CD4-positive, alpha-beta memory T cell (primary cell): ENCODE measurements at regions of chr3 and their contacts with region 1.

Region 1: GRCh38 chr3:99850608-99851007 is 32.9 kb downstream of the CMSS1 start:
- DNase-seq: no peak
- H3K4me3 ChIP-seq: no peak overlapping the region
- H3K4me3 Mint-ChIP-seq: no peak overlapping the region
- H3K27ac ChIP-seq: no peak overlapping the region
- H3K27ac Mint-ChIP-seq: no peak overlapping the region
- H3K4me1 ChIP-seq: no peaks in the 10 kb centered on the region
- H3K4me1 Mint-ChIP-seq: peaks cover 0 to 7% (median 3%) of the 10 kb centered on the region in 4 donors
- H3K27me3 ChIP-seq: no peaks in the 10 kb centered on the region
- H3K27me3 Mint-ChIP-seq: no peaks in the 10 kb centered on the region

Region 2: GRCh38 chr3:99794485-99794884 is 56.1 kb before region 1 on chr3:
- CTCF ChIA-PET with region 1: no interaction called
- POLR2A ChIA-PET with region 1: no interaction called
- intact Hi-C with region 1: no loop called
- DNase-seq: no peak
- H3K4me3 ChIP-seq: no peak overlapping the region
- H3K4me3 Mint-ChIP-seq: no peak overlapping the region
- H3K27ac ChIP-seq: no peak overlapping the region
- H3K27ac Mint-ChIP-seq: no peak overlapping the region
- H3K4me1 ChIP-seq: no peaks in the 10 kb centered on the region
- H3K4me1 Mint-ChIP-seq: no peaks in the 10 kb centered on the region
- H3K27me3 ChIP-seq: no peaks in the 10 kb centered on the region
- H3K27me3 Mint-ChIP-seq: peaks cover 2 to 3% of the 10 kb centered on the region in 2 donors

Region 3: GRCh38 chr3:99808151-99808794 is 42.3 kb before region 1 on chr3:
- CTCF ChIA-PET with region 1: interaction called, 10 read pairs
- POLR2A ChIA-PET with region 1: no interaction called
- intact Hi-C with region 1: no loop called
- DNase-seq: peak in 4 of 5 donors; percentile 32 to 43 (median 38)
- H3K4me3 ChIP-seq: no peak overlapping the region
- H3K4me3 Mint-ChIP-seq: no peak overlapping the region
- H3K27ac ChIP-seq: no peak overlapping the region
- H3K27ac Mint-ChIP-seq: no peak overlapping the region
- H3K4me1 ChIP-seq: no peaks in the 10 kb centered on the region
- H3K4me1 Mint-ChIP-seq: peaks cover 0 to 5% (median 4%) of the 10 kb centered on the region in 4 donors
- H3K27me3 ChIP-seq: no peaks in the 10 kb centered on the region
- H3K27me3 Mint-ChIP-seq: no peaks in the 10 kb centered on the region